ENCODE measurements at regions of chr1 and their contacts with region 1.

Region 1: GRCh38 chr1:41862384-41863174 is 56.1 kb downstream of the HIVEP3 start:
- DNase-seq: peak; percentile 83
- ATAC-seq: peak; percentile 93
- H3K4me3 Mint-ChIP-seq: peak overlapping the region; percentile 9
- H3K27ac Mint-ChIP-seq: peak overlapping the region; percentile 84
- H3K4me1 Mint-ChIP-seq: peaks cover 41% of the 10 kb centered on the region
- H3K27me3 Mint-ChIP-seq: no peaks in the 10 kb centered on the region

Region 2: DNA sequence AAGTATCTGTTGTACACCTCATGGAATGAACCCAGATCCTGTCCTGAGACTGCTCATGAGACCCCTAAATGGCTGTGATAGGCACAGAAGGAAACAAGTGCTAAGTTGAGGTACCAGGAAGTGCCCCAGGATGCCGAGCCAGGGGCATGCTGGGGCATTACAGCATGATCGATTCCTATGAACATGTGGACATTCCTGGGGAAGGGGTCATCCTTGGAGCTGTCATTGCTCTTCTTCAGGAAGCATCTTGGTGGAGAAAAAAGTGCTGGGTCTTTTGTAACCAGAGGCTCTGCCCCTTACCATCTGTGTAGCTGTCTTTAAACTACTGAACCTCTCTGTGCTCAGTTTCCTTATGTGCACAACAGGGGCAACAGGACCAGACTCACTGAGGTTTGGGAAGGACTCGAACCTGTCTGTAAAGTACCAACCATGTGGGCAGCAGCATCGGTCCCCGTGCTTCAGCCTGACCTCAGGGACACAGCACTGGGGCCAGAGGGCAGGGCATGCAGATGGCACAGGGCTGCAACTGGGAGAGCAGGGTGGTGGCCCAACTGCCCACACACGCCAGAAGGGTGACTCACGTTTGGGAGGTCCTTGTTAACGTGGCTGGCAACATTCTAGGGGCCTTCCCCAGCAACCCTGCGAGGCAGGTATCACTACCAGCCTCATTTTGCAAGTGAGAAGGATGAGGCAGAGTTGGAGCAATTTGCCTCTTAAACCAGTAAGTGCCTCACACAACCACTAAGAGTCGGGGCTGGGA is 235.8 kb before region 1 on chr1:
- CTCF ChIA-PET with region 1: interaction called, 5 read pairs
- POLR2A ChIA-PET with region 1: no interaction called
- intact Hi-C with region 1: loop called in 1 of 2 experiments (anchors 1 kb)
- DNase-seq: peak; percentile 88
- ATAC-seq: peak; percentile 98
- H3K4me3 Mint-ChIP-seq: no peak overlapping the region
- H3K27ac Mint-ChIP-seq: peak overlapping the region; percentile 82
- H3K4me1 Mint-ChIP-seq: peaks cover 84% of the 10 kb centered on the region
- H3K27me3 Mint-ChIP-seq: no peaks in the 10 kb centered on the region

Region 3: DNA sequence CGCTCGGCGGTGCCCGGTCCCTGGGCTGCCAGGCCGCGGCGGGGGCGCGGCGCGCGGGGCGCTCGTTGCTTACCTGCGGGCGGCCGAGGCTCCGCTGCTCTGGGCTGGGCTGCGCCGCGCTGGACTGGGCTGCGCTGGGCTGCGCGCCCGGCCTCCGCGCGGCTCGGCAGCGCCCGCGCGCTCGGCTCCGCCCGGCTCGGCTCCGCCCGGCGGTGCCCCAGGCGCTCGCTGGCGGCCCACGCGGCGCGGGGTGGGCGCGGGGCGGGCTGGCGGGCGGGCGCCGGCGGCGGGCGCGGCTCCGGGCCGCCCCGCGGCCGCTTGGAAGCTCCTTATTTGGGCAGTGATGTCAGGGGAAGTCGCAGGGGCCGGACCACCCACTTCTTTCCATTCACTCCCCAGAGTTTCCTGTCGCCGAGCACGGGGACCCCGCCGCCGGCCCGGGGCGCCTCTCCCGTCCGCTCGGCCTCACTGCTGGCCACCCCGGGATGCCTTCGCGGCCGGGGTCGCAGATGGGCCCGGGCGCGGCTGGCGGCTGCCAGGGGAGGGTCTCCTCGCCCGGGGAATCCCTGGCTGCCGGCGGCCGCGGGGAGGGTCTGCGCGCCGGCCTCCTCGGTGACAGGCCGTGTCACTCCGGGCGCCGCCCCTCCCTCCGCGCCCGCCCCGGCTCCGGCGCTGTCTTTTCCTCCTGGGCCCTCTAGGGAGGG is 200.4 kb before region 1 on chr1:
- CTCF ChIA-PET with region 1: no interaction called
- POLR2A ChIA-PET with region 1: no interaction called
- intact Hi-C with region 1: loop called (anchors 5 kb)
- DNase-seq: peak; percentile 87
- ATAC-seq: peak; percentile 68
- H3K4me3 Mint-ChIP-seq: peak overlapping the region; percentile 97
- H3K27ac Mint-ChIP-seq: no peak overlapping the region
- H3K4me1 Mint-ChIP-seq: peaks cover 79% of the 10 kb centered on the region
- H3K27me3 Mint-ChIP-seq: no peaks in the 10 kb centered on the region

Region 4: GRCh38 chr1:41751804-41752513 is 110.6 kb before region 1 on chr1:
- CTCF ChIA-PET with region 1: no interaction called
- POLR2A ChIA-PET with region 1: no interaction called
- intact Hi-C with region 1: loop called (anchors 1 kb)
- DNase-seq: peak; percentile 30
- ATAC-seq: peak; percentile 17
- H3K4me3 Mint-ChIP-seq: no peak overlapping the region
- H3K27ac Mint-ChIP-seq: peak overlapping the region; percentile 90
- H3K4me1 Mint-ChIP-seq: peaks cover 73% of the 10 kb centered on the region
- H3K27me3 Mint-ChIP-seq: no peaks in the 10 kb centered on the region

Region 5: GRCh38 chr1:41789419-41790260 is 72.9 kb before region 1 on chr1:
- CTCF ChIA-PET with region 1: no interaction called
- POLR2A ChIA-PET with region 1: no interaction called
- intact Hi-C with region 1: no loop called
- DNase-seq: no peak
- ATAC-seq: no peak
- H3K4me3 Mint-ChIP-seq: no peak overlapping the region
- H3K27ac Mint-ChIP-seq: peak overlapping the region; percentile 5
- H3K4me1 Mint-ChIP-seq: peaks cover 58% of the 10 kb centered on the region
- H3K27me3 Mint-ChIP-seq: no peaks in the 10 kb centered on the region

Region 6: GRCh38 chr1:41802532-41803501 is 59.8 kb before region 1 on chr1:
- CTCF ChIA-PET with region 1: interaction called, 3 read pairs
- POLR2A ChIA-PET with region 1: no interaction called
- intact Hi-C with region 1: loop called (anchors 1 to 2 kb)
- DNase-seq: no peak
- ATAC-seq: no peak
- H3K4me3 Mint-ChIP-seq: no peak overlapping the region
- H3K27ac Mint-ChIP-seq: peak overlapping the region; percentile 47
- H3K4me1 Mint-ChIP-seq: peaks cover 81% of the 10 kb centered on the region
- H3K27me3 Mint-ChIP-seq: no peaks in the 10 kb centered on the region

Region 7: GRCh38 chr1:41898191-41898713 is 35.7 kb after region 1 on chr1:
- CTCF ChIA-PET with region 1: no interaction called
- POLR2A ChIA-PET with region 1: no interaction called
- intact Hi-C with region 1: loop called in 1 of 2 experiments (anchors 2 kb)
- DNase-seq: peak; percentile 91
- ATAC-seq: peak; percentile 98
- H3K4me3 Mint-ChIP-seq: peak overlapping the region; percentile 66
- H3K27ac Mint-ChIP-seq: peak overlapping the region; percentile 97
- H3K4me1 Mint-ChIP-seq: peaks cover 72% of the 10 kb centered on the region
- H3K27me3 Mint-ChIP-seq: no peaks in the 10 kb centered on the region

Measured in activated CD4-positive, alpha-beta T cell treated with anti-CD3 and anti-CD28 coated beads for 36 hours (primary cell).